Caki2 (cell line): ENCODE measurements at regions of chr3 and their contacts with region 1.

Region 1: GRCh38 chr3:134559591-134559990 is 73.7 kb downstream of the CEP63 start:
- DNase-seq: no peak

Region 2: DNA sequence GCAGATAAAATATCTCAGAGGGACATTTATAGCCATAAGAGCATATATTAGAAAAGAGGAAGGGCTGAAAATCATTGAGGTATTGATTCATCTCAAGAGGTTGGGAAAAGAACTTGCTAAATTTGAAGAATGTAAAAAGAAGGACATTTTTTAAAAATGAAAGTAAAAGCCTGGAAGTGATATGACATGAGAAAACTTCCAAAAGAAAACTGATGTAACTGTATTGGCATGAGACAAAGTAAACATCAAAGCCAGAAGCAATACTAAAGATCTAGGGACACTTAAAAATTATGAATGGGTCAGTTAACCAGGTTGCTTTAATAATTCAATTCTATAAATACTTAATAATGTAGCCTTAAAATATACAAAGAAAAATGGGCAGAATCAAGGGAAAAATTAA is 41.8 kb before region 1 on chr3:
- in situ Hi-C with region 1: loop called (anchors 5 kb)
- DNase-seq: no peak